ENCODE measurements at regions of chr6 and their contacts with region 1.

Region 1: DNA sequence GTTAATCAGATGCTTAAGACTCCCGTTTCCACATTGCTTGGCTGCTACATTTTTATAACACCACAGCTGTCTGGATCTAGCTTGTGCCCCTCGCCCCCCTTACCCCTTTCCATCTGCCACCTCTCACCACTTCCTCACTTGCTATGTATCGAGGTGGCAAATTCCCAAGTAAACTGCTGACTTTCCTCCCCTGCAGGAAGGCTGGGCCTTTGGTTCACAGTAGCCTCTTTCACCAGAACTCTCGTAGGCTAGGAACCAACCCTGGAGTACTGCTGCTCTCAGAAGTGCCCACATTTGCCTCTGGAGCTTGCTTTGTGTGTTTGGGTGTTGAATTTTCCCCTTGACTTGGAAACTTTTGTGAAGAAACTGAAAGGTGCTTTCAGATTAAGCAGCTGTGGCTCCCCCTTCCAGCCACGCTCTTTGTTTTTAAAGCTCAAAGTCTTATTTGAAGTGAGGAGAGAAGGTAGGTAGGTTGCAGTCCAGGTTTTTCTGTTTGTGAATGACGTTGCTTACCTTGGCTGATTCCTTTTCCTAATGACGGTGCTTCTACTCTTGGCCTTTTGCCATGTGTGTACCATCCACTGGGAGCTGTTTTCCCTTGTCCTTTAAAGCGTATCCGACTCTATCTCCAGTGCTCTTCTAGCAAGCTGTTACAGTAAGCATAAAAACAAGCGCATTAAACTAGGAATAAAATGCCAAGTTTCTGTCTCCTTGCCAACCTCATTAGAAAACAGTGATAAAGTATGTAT is 90.4 kb downstream of the CARMIL1 start:
- DNase-seq: peak in 8 of 9 donors; percentile 34 to 67 (median 50)
- ATAC-seq: peak; percentile 52
- H3K4me3 ChIP-seq: peak overlapping the region; percentile 14
- H3K4me3 Mint-ChIP-seq: peak overlapping the region; percentile 79 to 97 (median 91)
- H3K27ac ChIP-seq: peak overlapping the region; percentile 80
- H3K27ac Mint-ChIP-seq: peak overlapping the region; percentile 82 to 100 (median 99)
- H3K4me1 ChIP-seq: peaks cover 18 to 46% of the 10 kb centered on the region in 2 donors
- H3K4me1 Mint-ChIP-seq: peaks cover 43 to 100% (median 96%) of the 10 kb centered on the region in 7 donors
- H3K27me3 ChIP-seq: no peaks in the 10 kb centered on the region
- H3K27me3 Mint-ChIP-seq: no peaks in the 10 kb centered on the region

Region 2: GRCh38 chr6:24574809-24575208 is 794.8 kb before region 1 on chr6:
- CTCF ChIA-PET with region 1: no interaction called
- POLR2A ChIA-PET with region 1: no interaction called
- intact Hi-C with region 1: no loop called
- DNase-seq: no peak
- ATAC-seq: peak; percentile 57
- H3K4me3 ChIP-seq: no peak overlapping the region
- H3K4me3 Mint-ChIP-seq: no peak overlapping the region
- H3K27ac ChIP-seq: no peak overlapping the region
- H3K27ac Mint-ChIP-seq: no peak overlapping the region
- H3K4me1 ChIP-seq: no peaks in the 10 kb centered on the region
- H3K4me1 Mint-ChIP-seq: peaks cover 0 to 2% (median 0%) of the 10 kb centered on the region in 7 donors
- H3K27me3 ChIP-seq: no peaks in the 10 kb centered on the region
- H3K27me3 Mint-ChIP-seq: peaks cover 0 to 28% (median 0%) of the 10 kb centered on the region in 5 donors

Region 3: GRCh38 chr6:25130518-25130917 is 239.1 kb before region 1 on chr6:
- CTCF ChIA-PET with region 1: no interaction called
- POLR2A ChIA-PET with region 1: no interaction called
- intact Hi-C with region 1: loop called (anchors 5 kb)
- DNase-seq: no peak
- ATAC-seq: no peak
- H3K4me3 ChIP-seq: no peak overlapping the region
- H3K4me3 Mint-ChIP-seq: peak overlapping the region in 3 of 10 donors; percentile 20 to 28 (median 21)
- H3K27ac ChIP-seq: no peak overlapping the region
- H3K27ac Mint-ChIP-seq: peak overlapping the region in 4 of 9 donors; percentile 8 to 47 (median 26)
- H3K4me1 ChIP-seq: peaks cover 0 to 17% of the 10 kb centered on the region in 2 donors
- H3K4me1 Mint-ChIP-seq: peaks cover 17 to 60% (median 44%) of the 10 kb centered on the region in 7 donors
- H3K27me3 ChIP-seq: no peaks in the 10 kb centered on the region
- H3K27me3 Mint-ChIP-seq: no peaks in the 10 kb centered on the region

Region 4: GRCh38 chr6:25354078-25354932 is 15.3 kb before region 1 on chr6:
- CTCF ChIA-PET with region 1: interaction called, 5 read pairs
- POLR2A ChIA-PET with region 1: interaction called, 17 read pairs
- intact Hi-C with region 1: no loop called
- DNase-seq: no peak
- ATAC-seq: no peak
- H3K4me3 ChIP-seq: no peak overlapping the region
- H3K4me3 Mint-ChIP-seq: no peak overlapping the region
- H3K27ac ChIP-seq: no peak overlapping the region
- H3K27ac Mint-ChIP-seq: no peak overlapping the region
- H3K4me1 ChIP-seq: peaks cover 0 to 8% of the 10 kb centered on the region in 2 donors
- H3K4me1 Mint-ChIP-seq: peaks cover 6 to 62% (median 42%) of the 10 kb centered on the region in 7 donors
- H3K27me3 ChIP-seq: no peaks in the 10 kb centered on the region
- H3K27me3 Mint-ChIP-seq: no peaks in the 10 kb centered on the region

Region 5: GRCh38 chr6:25441663-25442270 is 72.2 kb after region 1 on chr6:
- CTCF ChIA-PET with region 1: interaction called, 6 read pairs
- POLR2A ChIA-PET with region 1: interaction called, 10 read pairs
- intact Hi-C with region 1: loop called in 1 of 2 experiments (anchors 1 kb)
- DNase-seq: peak in 7 of 9 donors; percentile 49 to 75 (median 64)
- ATAC-seq: peak; percentile 84
- H3K4me3 ChIP-seq: no peak overlapping the region
- H3K4me3 Mint-ChIP-seq: peak overlapping the region in 7 of 10 donors; percentile 31 to 83 (median 49)
- H3K27ac ChIP-seq: peak overlapping the region; percentile 70
- H3K27ac Mint-ChIP-seq: peak overlapping the region in 4 of 9 donors; percentile 69 to 95 (median 86)
- H3K4me1 ChIP-seq: peaks cover 0 to 30% of the 10 kb centered on the region in 2 donors
- H3K4me1 Mint-ChIP-seq: peaks cover 6 to 37% (median 14%) of the 10 kb centered on the region in 7 donors
- H3K27me3 ChIP-seq: no peaks in the 10 kb centered on the region
- H3K27me3 Mint-ChIP-seq: no peaks in the 10 kb centered on the region

Region 6: GRCh38 chr6:25556516-25556915 is 186.9 kb after region 1 on chr6:
- CTCF ChIA-PET with region 1: no interaction called
- POLR2A ChIA-PET with region 1: no interaction called
- intact Hi-C with region 1: no loop called
- DNase-seq: peak; percentile 14 to 72 (median 55)
- ATAC-seq: peak; percentile 71
- H3K4me3 ChIP-seq: no peak overlapping the region
- H3K4me3 Mint-ChIP-seq: no peak overlapping the region
- H3K27ac ChIP-seq: no peak overlapping the region
- H3K27ac Mint-ChIP-seq: no peak overlapping the region
- H3K4me1 ChIP-seq: no peaks in the 10 kb centered on the region
- H3K4me1 Mint-ChIP-seq: peaks cover 0 to 6% (median 3%) of the 10 kb centered on the region in 7 donors
- H3K27me3 ChIP-seq: no peaks in the 10 kb centered on the region
- H3K27me3 Mint-ChIP-seq: peaks cover 0 to 6% (median 0%) of the 10 kb centered on the region in 5 donors

Region 7: GRCh38 chr6:26285143-26286134 is 915.8 kb after region 1 on chr6:
- CTCF ChIA-PET with region 1: no interaction called
- POLR2A ChIA-PET with region 1: no interaction called
- intact Hi-C with region 1: no loop called
- DNase-seq: peak; percentile 72 to 97 (median 92)
- ATAC-seq: peak; percentile 91
- H3K4me3 ChIP-seq: peak overlapping the region; percentile 88
- H3K4me3 Mint-ChIP-seq: peak overlapping the region; percentile 86 to 96 (median 90)
- H3K27ac ChIP-seq: peak overlapping the region; percentile 91
- H3K27ac Mint-ChIP-seq: peak overlapping the region; percentile 91 to 100 (median 98)
- H3K4me1 ChIP-seq: peaks cover 0 to 8% of the 10 kb centered on the region in 2 donors
- H3K4me1 Mint-ChIP-seq: peaks cover 7 to 48% (median 33%) of the 10 kb centered on the region in 7 donors
- H3K27me3 ChIP-seq: no peaks in the 10 kb centered on the region
- H3K27me3 Mint-ChIP-seq: peaks cover 0 to 9% (median 5%) of the 10 kb centered on the region in 5 donors